ENCODE measurements at regions of chr6 and their contacts with region 1.

Region 1: GRCh38 chr6:36885461-36886401 is at the start of gene C6orf89:
- DNase-seq: peak; percentile 91 to 99 (median 97)
- ATAC-seq: peak; percentile 98 to 100 (median 99)
- H3K4me3 ChIP-seq: peak within 1 kb of the TSS; percentile 77 to 85
- H3K4me3 Mint-ChIP-seq: peak within 1 kb of the TSS; percentile 86 to 87 (median 87)
- H3K27ac ChIP-seq: peak within 1 kb of the TSS; percentile 94
- H3K27ac Mint-ChIP-seq: peak within 1 kb of the TSS; percentile 97 to 98
- H3K4me1 ChIP-seq: peaks cover 11 to 15% of the 10 kb centered on the region in 2 experiments
- H3K4me1 Mint-ChIP-seq: peaks cover 35 to 48% (median 48%) of the 10 kb centered on the region in 3 donors
- H3K27me3 ChIP-seq: no peaks in the 10 kb centered on the region
- H3K27me3 Mint-ChIP-seq: no peaks in the 10 kb centered on the region
- total RNA-seq, gene C6orf89: 32.6 to 57.9 (median 46.1) TPM

Region 2: GRCh38 chr6:36874443-36875249 is 11.1 kb before region 1 on chr6 and contains the start of gene PPIL1:
- CTCF ChIA-PET with region 1: interaction called, 4 to 49 read pairs
- POLR2A ChIA-PET with region 1: interaction called, 6 to 8 read pairs
- DNase-seq: peak; percentile 69 to 91 (median 83)
- ATAC-seq: peak; percentile 91 to 94 (median 92)
- H3K4me3 ChIP-seq: peak within 1 kb of the TSS; percentile 88 to 94
- H3K4me3 Mint-ChIP-seq: peak within 1 kb of the TSS; percentile 88 to 96 (median 94)
- H3K27ac ChIP-seq: peak within 1 kb of the TSS; percentile 76
- H3K27ac Mint-ChIP-seq: peak within 1 kb of the TSS; percentile 99 to 100
- H3K4me1 ChIP-seq: peaks cover 11% of the 10 kb centered on the region in 2 experiments
- H3K4me1 Mint-ChIP-seq: peaks cover 42 to 51% (median 46%) of the 10 kb centered on the region in 3 donors
- H3K27me3 ChIP-seq: peaks cover 0 to 5% of the 10 kb centered on the region in 2 experiments
- H3K27me3 Mint-ChIP-seq: peaks cover 6 to 8% of the 10 kb centered on the region in 2 donors
- total RNA-seq, gene PPIL1: 5.0 to 14.4 (median 10.6) TPM

Region 3: DNA sequence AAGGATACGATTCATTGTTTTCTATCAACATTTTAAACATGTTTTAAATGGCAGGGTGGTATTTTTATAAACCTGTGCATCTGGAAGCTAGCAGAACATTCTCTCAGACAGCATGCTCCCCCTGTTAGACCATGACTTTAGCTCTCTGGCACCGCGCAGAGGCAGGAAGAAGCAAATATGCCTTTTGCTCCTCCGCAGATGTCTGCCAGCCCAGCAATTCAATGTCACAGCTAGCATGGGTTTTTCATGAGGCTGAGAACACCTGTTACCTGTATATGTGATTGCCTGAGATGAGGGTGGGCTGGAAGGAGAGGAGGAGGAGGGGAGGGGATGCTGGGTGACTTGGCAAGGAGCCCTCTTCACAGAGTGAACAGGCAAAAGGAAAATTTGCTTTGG is 93.6 kb after region 1 on chr6:
- CTCF ChIA-PET with region 1: interaction called, 3 to 11 read pairs
- POLR2A ChIA-PET with region 1: no interaction called
- DNase-seq: peak in 27 of 35 experiments; percentile 16 to 63 (median 37)
- ATAC-seq: peak; percentile 64 to 77 (median 74)
- H3K4me3 ChIP-seq: no peak overlapping the region
- H3K4me3 Mint-ChIP-seq: no peak overlapping the region
- H3K27ac ChIP-seq: no peak overlapping the region
- H3K27ac Mint-ChIP-seq: peak overlapping the region; percentile 23 to 73
- H3K4me1 ChIP-seq: peaks cover 11 to 37% of the 10 kb centered on the region in 2 experiments
- H3K4me1 Mint-ChIP-seq: peaks cover 33 to 36% (median 35%) of the 10 kb centered on the region in 3 donors
- H3K27me3 ChIP-seq: no peaks in the 10 kb centered on the region
- H3K27me3 Mint-ChIP-seq: no peaks in the 10 kb centered on the region

Measured in T-cell (primary cell).